Right ventricle myocardium inferior (tissue), 1 donor: ENCODE measurements at regions of chr14 and their contacts with region 1.

Region 1: GRCh38 chr14:93042968-93043940 is 72.5 kb downstream of the ITPK1 start:
- DNase-seq: no peak
- ATAC-seq: peak; percentile 74

Region 2: GRCh38 chr14:92990456-92991430 is 52.5 kb before region 1 on chr14:
- intact Hi-C with region 1: loop called (anchors 5 kb)
- DNase-seq: no peak
- ATAC-seq: no peak

Region 3: DNA sequence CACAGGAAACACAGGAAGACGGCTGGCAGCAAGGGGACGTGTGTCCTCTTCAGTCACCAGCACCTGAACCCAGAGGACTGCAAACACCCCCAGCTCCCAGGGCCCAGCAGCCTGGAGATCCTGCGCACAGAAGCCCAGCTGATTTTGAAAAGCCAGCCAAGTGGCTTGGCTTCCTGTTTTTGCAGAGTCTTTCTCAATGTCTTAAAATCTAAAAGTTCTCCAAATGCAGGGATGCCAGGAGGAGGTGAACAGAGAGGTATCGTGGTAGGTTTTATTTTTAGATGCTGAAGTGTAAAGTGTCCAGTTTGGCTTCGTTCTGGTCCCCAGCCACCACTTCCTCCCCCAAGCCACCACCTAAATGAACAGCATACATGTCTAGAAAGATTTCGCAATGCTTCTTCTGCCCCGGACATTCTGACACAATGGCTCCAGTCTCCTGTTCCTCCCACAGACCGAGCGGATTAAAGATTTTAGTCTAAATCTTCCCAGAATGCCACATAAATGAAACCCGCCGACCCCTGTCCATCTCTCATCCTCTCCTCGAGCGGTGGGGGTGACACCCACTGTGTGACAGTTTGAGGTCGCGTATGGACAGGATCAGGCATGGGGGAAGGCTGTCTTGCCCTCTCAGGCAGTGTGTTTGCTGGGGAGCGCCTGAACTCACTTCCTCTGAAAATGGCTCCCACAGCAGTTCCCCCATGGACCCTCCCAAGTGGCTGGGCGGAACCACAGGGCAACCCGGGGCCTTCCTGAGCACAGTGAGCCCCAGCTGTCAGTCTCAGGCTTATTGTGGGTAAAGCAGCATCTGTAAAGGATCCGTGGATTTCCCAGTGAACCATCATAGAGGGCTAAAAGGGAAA is 30.9 kb after region 1 on chr14:
- intact Hi-C with region 1: no loop called
- DNase-seq: no peak
- ATAC-seq: peak; percentile 82

Region 4: DNA sequence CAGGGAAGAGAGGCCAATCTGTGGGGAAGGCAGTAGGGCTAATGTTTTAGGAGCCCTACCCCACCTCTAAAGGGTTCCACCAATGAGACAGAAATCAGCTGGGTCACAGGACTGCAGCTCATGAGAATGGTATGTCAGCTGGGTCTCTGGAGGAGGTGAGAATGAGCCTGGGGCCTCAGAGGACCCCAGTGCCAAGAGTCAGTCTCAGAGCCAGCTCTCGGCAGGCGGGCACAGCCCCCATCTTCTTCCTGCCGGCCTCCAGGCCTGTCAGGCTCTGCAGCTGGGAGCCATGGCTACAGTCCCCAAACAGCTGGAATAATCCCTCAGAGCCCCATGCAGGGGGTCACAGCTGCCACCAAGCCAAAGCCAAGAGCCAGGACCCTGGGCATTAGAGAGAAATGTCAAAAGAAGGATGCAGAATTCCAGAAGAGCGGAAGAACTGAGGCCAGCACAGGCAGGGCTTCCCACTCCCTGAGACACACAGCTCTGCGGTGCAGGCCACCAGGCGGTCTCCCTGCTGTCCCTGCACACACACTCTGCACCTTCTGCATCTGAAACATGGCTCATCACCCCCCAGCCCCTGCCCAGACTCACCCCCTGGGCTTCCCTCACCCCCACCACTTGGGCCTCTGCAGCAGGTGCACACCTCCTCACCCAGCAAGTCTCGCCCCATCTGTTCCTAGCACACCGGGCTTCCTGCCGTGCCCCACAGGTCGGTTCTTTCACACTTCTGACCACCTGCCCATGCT is 46.4 kb after region 1 on chr14:
- intact Hi-C with region 1: loop called (anchors 2 kb)
- DNase-seq: no peak
- ATAC-seq: no peak